Left colon (tissue), 2 donors: ENCODE measurements at regions of chr1 and their contacts with region 1.

Region 1: GRCh38 chr1:22420455-22421053 is 31.1 kb upstream of the ZBTB40 start:
- DNase-seq: peak; percentile 67 to 87
- ATAC-seq: peak; percentile 94

Region 2: DNA sequence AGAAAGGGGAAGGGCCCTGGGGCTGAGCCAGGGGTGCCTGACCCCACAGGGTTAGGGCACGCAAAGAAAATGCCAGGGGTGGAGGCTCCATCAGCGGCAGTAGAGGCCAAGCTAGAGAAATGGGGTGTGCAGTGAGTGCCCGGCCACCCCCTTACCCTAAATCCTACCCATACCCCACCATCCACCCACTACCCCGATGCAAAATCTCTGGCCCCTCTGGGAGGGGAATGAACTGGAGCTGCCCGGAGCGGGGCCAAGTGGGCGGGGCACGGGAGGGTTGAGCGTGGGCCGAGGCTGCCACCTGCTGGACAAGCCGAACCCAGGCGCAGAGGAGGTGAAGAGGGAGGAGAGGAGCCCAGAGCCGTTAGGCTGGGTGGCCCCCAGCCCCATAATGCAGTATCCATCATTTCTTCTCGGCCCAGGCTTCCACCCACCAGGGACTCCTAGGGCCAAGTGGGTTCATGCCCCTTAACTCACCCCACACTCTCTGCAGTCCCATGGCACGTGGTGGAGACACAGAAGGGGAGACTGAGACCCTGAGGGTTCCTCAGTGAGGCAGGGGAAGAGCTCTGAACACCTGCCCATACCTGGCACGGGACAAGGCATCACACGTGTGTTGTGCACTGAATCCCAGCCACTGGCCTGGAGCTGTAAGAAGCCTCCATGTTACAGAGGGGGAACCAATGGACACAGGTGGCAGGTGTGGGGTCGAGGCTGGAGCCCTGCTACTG is 221.5 kb after region 1 on chr1:
- intact Hi-C with region 1: loop called (anchors 2 to 5 kb)
- DNase-seq: peak; percentile 55 to 88
- ATAC-seq: peak; percentile 93